Left cardiac atrium (tissue), 4 donors: ENCODE measurements at regions of chr2 and their contacts with region 1.

Region 1: DNA sequence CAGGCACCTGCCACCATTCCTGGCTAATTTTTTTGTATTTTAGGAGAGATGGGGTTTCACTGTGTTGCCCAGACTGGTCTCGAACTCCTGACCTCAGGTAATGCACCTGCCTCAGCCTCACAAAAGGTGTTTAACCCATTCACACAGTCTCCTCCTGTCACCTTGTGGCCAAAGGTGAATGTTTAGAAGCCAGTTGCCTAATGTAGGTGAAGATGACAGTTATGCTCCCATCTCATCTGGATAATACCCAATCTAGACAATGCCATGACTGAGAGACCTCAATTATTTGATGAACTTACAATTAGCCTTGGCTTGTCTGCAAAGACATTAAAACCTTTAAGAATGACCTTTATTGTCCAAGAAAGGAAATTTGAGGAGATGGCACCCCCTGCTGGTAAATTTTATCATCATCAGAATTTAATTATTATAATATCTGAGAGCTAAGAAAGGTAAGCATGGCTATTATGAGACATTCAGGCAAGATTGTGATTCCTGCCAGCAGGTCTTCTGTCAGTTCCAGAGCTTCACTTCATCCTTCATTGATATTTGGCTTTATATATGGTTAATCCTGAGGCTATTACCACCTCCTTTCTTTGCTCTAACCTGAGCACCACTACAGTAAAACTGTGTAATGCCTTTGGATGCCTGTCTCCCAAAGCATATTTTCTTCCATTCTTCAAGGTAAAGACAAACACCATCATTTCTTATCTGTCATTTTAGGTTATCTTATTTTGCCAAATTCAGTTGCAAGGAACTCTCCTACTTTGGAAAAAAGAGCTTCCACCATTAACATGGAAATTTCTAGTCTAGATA is 117.6 kb downstream of the FAM124B start:
- DNase-seq: no peak
- ATAC-seq: peak; percentile 29 to 38

Region 2: DNA sequence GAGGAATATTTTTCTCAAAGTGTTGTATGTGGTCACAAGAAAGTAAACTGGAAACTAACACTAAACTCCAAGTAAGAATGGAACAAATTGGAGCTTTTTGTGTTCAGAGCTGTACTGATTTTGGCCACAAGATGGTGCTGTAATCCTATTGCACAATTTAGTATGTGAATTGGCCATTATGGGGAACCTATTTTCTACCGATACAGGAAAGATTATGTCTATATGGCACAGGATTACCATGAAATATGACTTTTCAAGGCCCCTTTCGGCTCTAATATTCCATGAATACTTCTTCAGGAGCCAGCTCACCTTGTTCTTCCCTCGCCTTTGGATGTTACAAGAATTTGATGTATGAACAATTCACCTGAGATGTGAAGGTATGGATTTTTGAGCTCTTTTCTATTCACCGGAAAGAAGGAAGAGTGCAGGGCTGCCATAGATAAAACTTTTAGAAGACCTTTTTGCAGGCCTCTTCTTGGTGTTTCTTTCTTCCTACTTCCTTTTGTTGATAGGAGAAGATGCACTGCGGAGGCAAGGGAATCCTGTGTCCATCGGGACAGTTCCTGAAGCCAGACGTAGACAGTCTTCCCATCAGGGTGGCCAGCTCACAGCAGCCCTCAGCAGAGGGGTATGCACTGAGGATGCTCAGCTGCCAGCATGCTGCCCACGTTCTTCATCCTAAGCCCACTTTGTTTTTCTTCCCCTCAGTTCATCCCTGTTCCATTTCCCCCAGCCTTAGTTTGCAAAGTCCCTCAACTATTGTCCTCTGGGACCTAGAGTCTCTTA is 313.8 kb before region 1 on chr2:
- intact Hi-C with region 1: loop called (anchors 2 to 5 kb)
- DNase-seq: no peak
- ATAC-seq: peak in 1 of 2 donors; percentile 58

Region 3: GRCh38 chr2:223993621-223994232 is 290.6 kb before region 1 on chr2:
- intact Hi-C with region 1: loop called (anchors 1 to 5 kb)
- DNase-seq: peak; percentile 60
- ATAC-seq: peak; percentile 62 to 74

Region 4: DNA sequence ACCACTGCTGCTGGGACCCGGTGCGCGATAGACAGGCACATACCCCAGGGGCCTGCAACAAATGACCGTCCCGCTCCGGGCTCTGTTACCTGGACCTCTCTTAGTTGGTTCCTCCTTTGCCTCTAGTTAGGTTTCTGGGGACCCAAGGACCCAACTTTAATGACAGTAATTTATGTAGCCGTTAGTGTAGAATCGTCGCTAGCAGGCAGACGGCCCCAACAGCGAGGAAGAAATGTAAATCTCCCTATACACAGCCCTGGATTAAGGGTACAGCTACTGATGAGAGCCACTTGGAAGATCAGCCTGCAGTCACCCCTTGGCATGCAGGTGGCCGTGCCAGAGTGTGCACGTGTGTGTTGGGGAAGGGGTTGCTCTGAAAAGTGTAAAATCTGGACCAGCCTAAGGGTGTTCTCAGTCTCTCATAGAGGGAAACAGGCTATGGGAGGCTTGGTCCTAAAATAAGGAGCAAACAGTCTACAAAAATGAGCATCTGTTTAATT is 244.3 kb before region 1 on chr2:
- intact Hi-C with region 1: loop called in 1 of 2 experiments (anchors 5 kb)
- DNase-seq: no peak
- ATAC-seq: no peak

Region 5: DNA sequence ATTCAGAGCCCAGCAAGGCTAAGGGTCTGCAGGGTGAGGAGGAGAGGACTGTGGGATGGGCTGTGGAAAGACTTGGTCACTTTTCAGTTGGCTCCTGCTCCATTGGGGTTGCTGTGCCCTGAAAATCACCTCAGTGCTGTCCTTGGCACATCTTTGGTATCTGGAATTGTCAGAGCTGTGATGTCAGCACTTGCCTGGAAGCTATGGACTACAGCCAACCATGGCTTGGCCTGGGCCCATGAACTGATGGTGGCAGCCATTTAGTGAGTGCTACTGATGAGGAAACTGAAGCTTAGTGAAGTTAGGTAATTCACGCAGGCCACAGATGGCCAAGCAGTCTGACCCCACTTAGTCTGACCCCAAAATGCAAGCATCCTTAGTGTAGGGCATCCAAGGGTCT is 123.4 kb before region 1 on chr2:
- intact Hi-C with region 1: loop called in 1 of 2 experiments (anchors 10 kb)
- DNase-seq: peak; percentile 61
- ATAC-seq: peak; percentile 35 to 81

Region 6: GRCh38 chr2:224561234-224562005 is 277.1 kb after region 1 on chr2:
- intact Hi-C with region 1: no loop called
- DNase-seq: no peak
- ATAC-seq: no peak

Region 7: GRCh38 chr2:224678634-224679263 is 394.4 kb after region 1 on chr2:
- intact Hi-C with region 1: no loop called
- DNase-seq: no peak
- ATAC-seq: no peak